Activated T-helper 1 cell treated with anti-CD3 and anti-CD28 coated beads, Interleukin-12 subunit alpha, Interleukin-12 subunit beta, Interleukin-2, Interleukin-4 antibody, amounts not matched to agents 30 ng/mL and 10 ng/mL and 1 ng/mL, durations not matched to agents 14 hours and 24 hours and 36 hours (primary cell): ENCODE measurements at regions of chr15 and their contacts with region 1.

Region 1: DNA sequence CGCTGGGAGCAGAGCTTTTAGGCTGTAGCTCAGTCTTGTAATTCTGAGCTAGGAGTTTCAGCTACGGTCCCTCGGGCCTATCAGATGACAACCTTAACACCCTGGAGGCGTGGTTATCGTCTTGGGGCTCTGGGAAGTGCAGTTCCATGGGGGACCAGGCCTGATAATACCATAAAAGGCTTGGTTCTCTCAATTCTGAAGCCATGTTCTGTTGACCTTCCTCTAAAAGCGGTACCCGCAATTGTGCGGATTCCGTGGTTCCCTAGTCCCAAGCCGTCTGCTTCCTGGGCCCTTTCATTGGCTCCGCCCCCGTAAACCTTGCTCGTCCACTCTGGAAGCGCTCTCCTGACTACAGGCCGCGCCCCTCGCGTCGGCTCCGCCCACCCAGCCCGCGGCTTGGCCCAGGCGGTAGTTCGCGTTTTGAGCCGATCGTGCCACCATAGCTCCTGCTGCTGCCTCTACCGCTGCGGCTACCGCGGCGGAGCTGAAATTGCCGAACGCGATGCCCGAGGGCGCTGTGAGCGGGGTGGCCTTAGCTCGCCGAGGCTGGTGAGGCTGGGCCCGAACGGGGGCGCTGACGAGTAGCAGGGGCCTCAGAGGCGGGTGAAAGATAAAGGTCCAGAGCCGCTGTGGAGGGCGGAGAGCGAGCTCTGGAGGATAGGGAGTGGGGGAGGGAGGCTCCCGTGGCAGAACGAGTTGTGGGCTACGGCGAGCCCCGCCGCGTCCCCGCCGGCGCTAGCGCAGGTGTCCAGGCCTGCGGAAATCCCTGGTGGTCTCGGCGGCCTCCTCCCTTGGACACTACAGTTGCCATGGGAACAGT is at the start of gene MAPKBP1:
- DNase-seq: peak; percentile 98
- H3K4me3 Mint-ChIP-seq: peak within 1 kb of the TSS; percentile 93
- H3K27ac Mint-ChIP-seq: peak within 1 kb of the TSS; percentile 92
- H3K4me1 Mint-ChIP-seq: peaks cover 59% of the 10 kb centered on the region
- H3K27me3 Mint-ChIP-seq: no peaks in the 10 kb centered on the region
- total RNA-seq, gene MAPKBP1: 26.3 and 28.2 TPM in 2 replicates

Region 2: DNA sequence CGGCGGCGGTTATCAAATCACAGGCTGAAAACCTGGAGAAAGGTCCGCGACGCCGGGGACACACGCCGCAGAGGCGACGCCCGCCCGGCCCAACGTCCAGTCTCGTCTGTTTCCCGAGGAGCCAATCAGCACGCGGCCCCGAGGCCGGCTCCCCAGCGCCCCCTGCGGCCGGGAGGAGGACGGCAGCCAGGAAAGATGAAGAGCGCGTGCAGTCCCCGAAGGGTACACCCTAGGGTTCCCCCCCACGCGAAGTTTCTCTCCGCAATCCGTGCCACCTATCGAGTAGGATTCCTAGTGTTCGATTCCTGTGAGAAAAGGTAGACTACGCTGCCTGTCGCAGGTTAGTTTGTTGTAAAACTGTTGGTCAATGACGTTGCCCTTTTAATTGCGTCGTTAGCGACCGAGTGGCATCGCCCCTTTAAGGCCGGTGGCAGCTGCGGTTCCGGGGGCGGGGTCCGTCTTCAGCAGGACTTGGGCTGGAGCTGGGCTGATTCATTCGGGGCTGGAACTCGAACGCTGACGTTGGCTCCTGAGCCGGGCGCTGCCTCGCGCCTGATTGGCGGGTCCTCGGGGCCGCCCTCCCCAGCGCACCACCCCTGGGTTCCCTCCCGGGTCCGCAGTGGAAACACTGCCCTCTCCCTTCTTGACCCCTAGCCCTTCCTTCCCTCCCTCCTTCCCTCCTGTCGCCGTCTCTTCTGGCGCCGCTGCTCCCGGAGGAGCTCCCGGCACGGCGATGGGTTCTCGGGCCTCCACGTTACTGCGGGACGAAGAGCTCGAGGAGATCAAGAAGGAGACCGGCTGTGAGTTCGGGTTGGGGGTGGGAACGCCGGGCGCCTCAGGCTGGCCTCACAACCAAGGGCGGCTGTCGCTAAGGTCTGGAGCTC is 543.4 kb before region 1 on chr15 and contains the starts of genes CHP1 and EXD1:
- intact Hi-C with region 1: loop called (anchors 5 kb)
- DNase-seq: peak; percentile 96
- H3K4me3 Mint-ChIP-seq: peak within 1 kb of the TSS; percentile 92
- H3K27ac Mint-ChIP-seq: peak within 1 kb of the TSS; percentile 89
- H3K4me1 Mint-ChIP-seq: peaks cover 23% of the 10 kb centered on the region
- H3K27me3 Mint-ChIP-seq: no peaks in the 10 kb centered on the region
- total RNA-seq, gene CHP1: 43.5 and 55.2 TPM in 2 replicates
- total RNA-seq, gene EXD1: not detected in 2 replicates

Region 3: DNA sequence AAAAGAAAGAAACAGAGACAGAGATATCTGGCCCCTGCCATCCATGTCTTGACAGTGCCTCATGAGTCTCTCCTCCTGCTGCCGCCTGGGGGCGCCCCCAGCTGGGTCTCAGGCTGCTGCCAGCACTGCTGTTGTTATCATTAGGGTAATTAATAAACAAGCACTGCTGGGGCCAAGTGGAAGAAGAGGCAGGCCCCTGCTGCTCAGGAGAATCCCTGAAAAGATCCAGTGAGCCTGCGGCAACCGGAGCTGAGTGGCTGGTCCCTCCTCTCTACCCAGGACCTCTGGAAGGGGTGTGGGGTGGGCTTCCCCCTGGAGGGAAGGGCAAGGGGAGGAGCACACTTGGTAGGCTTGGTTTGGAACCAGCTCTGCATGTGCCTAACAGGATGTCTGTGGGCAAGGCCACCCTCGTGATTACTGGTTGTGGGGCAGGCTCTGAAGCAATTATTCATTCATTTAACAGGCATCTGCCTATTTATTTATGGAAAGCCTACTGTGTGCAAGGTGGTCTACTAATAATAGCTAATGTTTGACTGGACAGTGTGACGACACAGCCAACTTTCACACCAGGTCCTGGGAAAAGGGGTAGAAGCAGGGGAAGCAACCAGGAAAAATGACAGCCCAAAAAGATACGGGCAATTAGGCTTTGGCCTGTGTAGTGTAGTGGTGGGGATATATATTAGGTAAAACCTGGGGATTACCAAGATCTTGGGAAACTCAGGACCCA is 216.4 kb before region 1 on chr15:
- intact Hi-C with region 1: loop called (anchors 1 kb)
- DNase-seq: peak; percentile 43
- H3K4me3 Mint-ChIP-seq: peak overlapping the region; percentile 92
- H3K27ac Mint-ChIP-seq: peak overlapping the region; percentile 89
- H3K4me1 Mint-ChIP-seq: peaks cover 19% of the 10 kb centered on the region
- H3K27me3 Mint-ChIP-seq: peaks cover 46% of the 10 kb centered on the region

Region 4: DNA sequence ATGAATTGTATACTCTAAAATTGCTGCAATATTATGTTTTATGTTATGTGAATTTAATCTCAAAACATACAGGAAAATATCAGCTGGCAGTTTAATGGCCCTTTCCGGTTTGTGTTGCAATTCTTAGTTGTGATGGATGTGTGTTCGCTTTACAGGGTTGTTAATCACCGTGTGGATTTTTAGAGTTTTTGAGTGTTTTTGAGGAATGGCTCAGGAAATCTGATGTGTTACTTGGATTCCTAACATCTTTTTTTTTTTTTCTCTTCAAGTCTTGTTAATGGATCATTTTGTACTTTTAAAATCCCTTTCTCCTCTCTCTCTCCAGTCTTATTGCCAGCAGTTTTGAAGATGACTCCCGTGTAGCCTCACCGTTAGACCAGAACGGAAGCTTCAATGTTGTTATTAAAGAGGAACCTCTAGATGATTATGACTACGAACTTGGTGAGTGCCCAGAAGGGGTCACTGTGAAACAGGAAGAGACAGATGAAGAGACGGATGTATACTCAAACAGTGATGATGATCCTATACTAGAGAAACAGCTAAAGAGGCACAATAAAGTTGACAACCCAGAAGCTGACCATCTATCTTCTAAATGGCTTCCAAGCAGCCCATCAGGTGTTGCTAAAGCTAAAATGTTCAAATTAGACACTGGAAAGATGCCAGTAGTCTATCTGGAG is 78.4 kb before region 1 on chr15:
- intact Hi-C with region 1: loop called (anchors 1 kb)
- DNase-seq: peak; percentile 34
- H3K4me3 Mint-ChIP-seq: peak overlapping the region; percentile 28
- H3K27ac Mint-ChIP-seq: peak overlapping the region; percentile 81
- H3K4me1 Mint-ChIP-seq: peaks cover 38% of the 10 kb centered on the region
- H3K27me3 Mint-ChIP-seq: no peaks in the 10 kb centered on the region

Region 5: DNA sequence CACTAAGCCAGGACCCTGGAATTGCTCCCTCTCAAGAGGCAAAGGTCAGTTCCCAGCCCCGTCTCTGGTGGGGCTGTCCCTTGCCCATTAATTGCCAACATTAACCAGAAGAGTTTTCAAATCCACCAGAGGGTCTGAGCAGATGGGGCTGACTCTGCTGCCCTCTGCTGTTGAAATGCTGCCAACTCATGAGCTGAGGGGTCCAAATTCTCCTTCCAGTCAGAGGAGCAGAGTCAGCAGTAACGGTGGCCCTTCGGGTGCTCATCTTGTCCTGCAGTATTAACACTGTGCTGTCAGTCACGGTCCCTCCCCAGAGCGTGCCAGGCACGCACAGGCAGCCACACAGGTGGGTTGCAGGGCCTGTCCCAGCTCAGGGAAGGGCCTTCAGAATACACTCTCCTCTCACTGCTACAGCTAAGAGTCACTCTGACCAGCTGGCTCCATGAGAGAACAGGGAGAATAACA is 130.3 kb after region 1 on chr15:
- intact Hi-C with region 1: loop called (anchors 1 kb)
- DNase-seq: peak; percentile 50
- H3K4me3 Mint-ChIP-seq: no peak overlapping the region
- H3K27ac Mint-ChIP-seq: no peak overlapping the region
- H3K4me1 Mint-ChIP-seq: peaks cover 8% of the 10 kb centered on the region
- H3K27me3 Mint-ChIP-seq: no peaks in the 10 kb centered on the region

Region 6: DNA sequence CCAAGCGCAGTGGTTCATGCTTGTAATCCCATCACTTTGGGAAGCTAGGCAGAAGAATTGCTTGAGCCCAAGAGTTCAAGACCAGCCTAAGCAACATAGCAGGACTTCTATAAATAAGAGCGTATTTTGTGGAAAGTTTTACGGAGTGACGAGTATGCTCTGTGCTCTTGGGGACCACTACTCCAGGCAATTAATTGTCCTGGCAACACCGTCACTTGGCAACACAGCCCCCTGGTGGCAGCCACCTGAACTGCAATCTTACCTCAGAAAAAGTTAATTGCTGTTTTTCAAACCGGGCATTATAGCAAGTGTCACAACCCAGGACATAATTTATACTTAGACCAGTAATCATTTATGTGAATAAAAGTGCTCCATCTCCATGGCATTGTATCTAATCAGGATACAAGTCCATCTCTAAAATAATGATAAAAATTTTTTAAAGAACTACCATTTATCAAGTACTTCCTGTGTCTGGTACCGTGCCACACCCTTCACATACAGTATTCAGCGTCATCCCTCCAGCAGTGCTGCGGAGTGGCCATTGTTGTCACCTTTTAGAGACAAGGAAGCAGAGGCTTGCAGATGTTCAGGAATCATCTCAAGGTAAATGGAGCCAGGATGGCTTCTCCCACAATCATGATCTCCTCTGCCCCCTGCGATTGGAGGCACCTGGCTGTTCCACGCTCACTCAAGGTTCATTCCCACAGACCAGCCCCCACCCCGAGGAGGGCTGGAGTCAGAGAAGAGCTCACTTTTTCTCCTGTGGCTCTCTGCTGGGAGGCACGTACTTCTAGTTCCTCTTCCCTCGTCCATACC is 285.6 kb after region 1 on chr15:
- intact Hi-C with region 1: loop called (anchors 2 kb)
- DNase-seq: peak; percentile 52
- H3K4me3 Mint-ChIP-seq: no peak overlapping the region
- H3K27ac Mint-ChIP-seq: no peak overlapping the region
- H3K4me1 Mint-ChIP-seq: peaks cover 10% of the 10 kb centered on the region
- H3K27me3 Mint-ChIP-seq: peaks cover 25% of the 10 kb centered on the region